ENCODE measurements at regions of chr6 and their contacts with region 1.

Region 1: GRCh38 chr6:14889191-14889590 is 356.7 kb upstream of the JARID2 start:
- DNase-seq: peak; percentile 81
- ATAC-seq: peak; percentile 78
- H3K4me3 ChIP-seq: peak overlapping the region; percentile 3; the same call in 1 of the 2 replicates
- H3K27ac ChIP-seq: peak overlapping the region; percentile 83
- H3K4me1 ChIP-seq: peaks cover 14% of the 10 kb centered on the region
- H3K27me3 ChIP-seq: no peaks in the 10 kb centered on the region
- CTCF ChIP-seq: no peak

Region 2: GRCh38 chr6:14841901-14842421 is 47.2 kb before region 1 on chr6:
- CTCF ChIA-PET with region 1: no interaction called
- POLR2A ChIA-PET with region 1: no interaction called
- intact Hi-C with region 1: loop called (anchors 1 kb)
- DNase-seq: peak; percentile 32
- ATAC-seq: peak; percentile 95
- H3K4me3 ChIP-seq: no peak overlapping the region
- H3K27ac ChIP-seq: no peak overlapping the region
- H3K4me1 ChIP-seq: peaks cover 9% of the 10 kb centered on the region
- H3K27me3 ChIP-seq: no peaks in the 10 kb centered on the region
- CTCF ChIP-seq: no peak

Region 3: DNA sequence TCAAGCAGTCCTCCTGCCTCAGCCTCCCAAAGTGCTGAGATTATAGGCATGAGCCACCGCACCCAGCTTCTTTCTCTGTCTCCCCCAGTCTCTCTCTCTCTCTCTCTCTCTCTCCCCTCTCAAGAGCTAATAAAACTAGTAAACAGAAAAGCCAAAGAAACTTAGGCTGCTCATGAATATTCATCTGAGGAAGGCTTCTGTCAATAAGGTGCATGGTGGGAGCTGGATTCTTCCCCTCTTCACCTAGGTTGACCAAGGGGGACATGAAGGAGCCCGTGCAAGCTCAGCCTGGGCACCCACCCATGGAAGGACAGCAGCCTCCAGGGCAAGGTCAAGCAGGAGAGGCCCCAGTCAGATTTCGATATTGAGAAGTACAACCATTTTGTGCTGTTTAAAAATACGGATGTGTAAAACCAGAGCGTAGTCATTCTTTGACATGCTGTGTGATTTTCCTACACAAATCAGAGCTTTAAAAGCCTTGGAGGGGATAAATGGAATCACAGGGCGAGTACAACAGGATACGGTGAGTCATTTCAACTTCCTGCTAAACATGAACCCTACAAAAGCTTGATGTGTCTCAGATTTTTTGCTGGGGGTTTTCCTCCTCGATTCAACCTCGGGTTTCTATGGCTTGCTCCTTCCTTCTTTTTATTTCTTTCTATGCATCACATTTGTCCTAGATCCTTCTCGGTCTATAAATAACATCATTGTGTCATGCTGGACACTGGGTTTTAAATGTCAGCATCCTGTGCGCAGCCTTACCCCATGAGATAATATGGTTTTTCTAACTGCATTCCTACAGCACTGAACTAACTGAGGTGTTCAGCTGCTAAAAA is 12.2 kb before region 1 on chr6:
- CTCF ChIA-PET with region 1: no interaction called
- POLR2A ChIA-PET with region 1: no interaction called
- intact Hi-C with region 1: loop called (anchors 1 kb)
- DNase-seq: peak; percentile 79
- ATAC-seq: peak; percentile 82
- H3K4me3 ChIP-seq: peak overlapping the region; percentile 34; the same call in 1 of the 2 replicates
- H3K27ac ChIP-seq: peak overlapping the region; percentile 96
- H3K4me1 ChIP-seq: peaks cover 32% of the 10 kb centered on the region
- H3K27me3 ChIP-seq: no peaks in the 10 kb centered on the region
- CTCF ChIP-seq: no peak

Region 4: DNA sequence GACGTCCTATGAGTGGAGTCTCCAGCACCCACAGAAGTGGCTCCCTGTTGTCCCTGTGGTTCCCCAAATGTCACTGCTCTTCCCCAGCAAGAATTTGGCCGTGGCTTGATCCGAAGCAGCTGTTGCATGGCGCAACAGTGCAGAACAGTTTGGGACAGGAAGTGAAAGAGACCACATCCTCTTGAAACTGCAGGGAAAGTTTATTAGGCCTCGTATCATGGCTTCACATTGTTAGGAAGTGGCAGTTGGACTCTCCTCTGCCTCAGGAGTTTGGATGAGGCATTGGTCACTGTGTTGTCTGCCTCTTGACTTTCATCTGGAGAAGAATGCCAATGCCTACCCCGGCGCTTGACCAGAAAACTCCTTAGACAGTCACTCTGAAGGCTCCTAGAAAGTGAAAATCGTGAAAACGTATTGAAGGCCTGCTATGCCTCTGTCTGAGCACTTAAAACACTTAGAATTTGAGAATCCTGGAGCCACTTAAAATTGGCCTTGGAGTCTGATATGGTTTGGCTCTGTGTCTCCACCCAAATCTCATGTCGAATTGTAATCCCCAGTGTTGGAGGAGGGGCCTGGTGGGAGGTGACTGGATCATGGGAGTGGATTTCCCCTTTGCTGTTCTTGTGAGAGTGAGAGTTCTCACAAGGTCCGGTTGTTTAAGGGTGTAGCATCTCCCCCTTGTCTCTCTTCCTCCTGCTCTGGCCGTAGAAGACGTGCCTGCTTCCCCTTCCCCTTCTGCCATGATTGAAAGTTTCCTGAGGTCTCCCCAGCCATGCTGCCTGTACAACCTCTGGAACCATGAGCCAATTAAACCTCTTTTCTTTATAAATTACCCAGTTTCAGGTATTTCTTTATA is 21.7 kb after region 1 on chr6:
- CTCF ChIA-PET with region 1: no interaction called
- POLR2A ChIA-PET with region 1: no interaction called
- intact Hi-C with region 1: no loop called
- DNase-seq: no peak
- ATAC-seq: no peak
- H3K4me3 ChIP-seq: no peak overlapping the region
- H3K27ac ChIP-seq: no peak overlapping the region
- H3K4me1 ChIP-seq: no peaks in the 10 kb centered on the region
- H3K27me3 ChIP-seq: no peaks in the 10 kb centered on the region
- CTCF ChIP-seq: no peak

Region 5: GRCh38 chr6:15026795-15027194 is 137.6 kb after region 1 on chr6:
- CTCF ChIA-PET with region 1: no interaction called
- POLR2A ChIA-PET with region 1: interaction called, 16 read pairs
- intact Hi-C with region 1: loop called (anchors 5 kb)
- DNase-seq: peak; percentile 78
- ATAC-seq: peak; percentile 99
- H3K4me3 ChIP-seq: no peak overlapping the region
- H3K27ac ChIP-seq: peak overlapping the region; percentile 49
- H3K4me1 ChIP-seq: peaks cover 11% of the 10 kb centered on the region; the same call in 1 of the 2 replicates
- H3K27me3 ChIP-seq: no peaks in the 10 kb centered on the region
- CTCF ChIP-seq: no peak

Measured in PC-3 (cell line).